A673 (cell line): ENCODE measurements at regions of chr4 and their contacts with region 1.

Region 1: GRCh38 chr4:26583865-26584652 is at the start of gene TBC1D19:
- DNase-seq: peak; percentile 95
- H3K4me3 ChIP-seq: peak within 1 kb of the TSS; percentile 97
- H3K27ac ChIP-seq: peak within 1 kb of the TSS; percentile 49
- H3K4me1 ChIP-seq: peaks cover 4% of the 10 kb centered on the region
- H3K27me3 ChIP-seq: no peaks in the 10 kb centered on the region
- CTCF ChIP-seq: 0 out of 2 replicates have a peak, but pooled peaks have one; percentile 6
- total RNA-seq, gene TBC1D19: 9.9 and 10.9 TPM in 2 replicates

Region 2: DNA sequence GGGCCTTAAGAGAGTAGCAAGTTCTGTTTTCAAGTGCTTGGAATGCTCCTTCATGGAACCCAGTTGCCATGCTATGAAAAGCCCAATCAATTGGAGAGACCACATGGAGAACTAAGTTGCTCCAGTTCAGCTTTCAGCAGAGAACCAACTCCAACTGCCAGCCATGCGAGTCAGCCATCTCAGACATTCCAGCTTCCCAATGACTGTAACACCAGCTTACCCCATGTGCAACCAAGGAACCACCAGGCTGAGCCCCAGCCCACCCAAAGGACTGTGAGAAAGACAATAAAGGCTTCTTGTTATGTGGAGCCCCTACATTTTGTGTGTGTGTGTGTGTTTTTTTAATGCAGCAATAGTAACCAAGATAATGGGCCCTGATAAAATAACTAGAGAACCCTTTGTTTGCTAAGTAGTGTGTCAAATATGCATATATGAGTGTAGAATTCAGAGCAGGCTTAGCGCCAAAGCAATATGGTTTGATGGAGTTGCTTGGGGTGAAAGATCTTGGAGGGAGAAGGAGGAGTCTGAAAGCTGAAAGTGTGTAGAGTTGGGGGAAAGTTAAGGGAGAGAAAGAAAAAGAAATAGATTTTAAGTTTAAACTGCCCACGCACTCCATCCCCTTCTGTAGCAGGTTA is 58.8 kb before region 1 on chr4:
- CTCF ChIA-PET with region 1: no interaction called
- POLR2A ChIA-PET with region 1: no interaction called
- intact Hi-C with region 1: no loop called
- DNase-seq: no peak
- H3K4me3 ChIP-seq: no peak overlapping the region
- H3K27ac ChIP-seq: no peak overlapping the region
- H3K4me1 ChIP-seq: no peaks in the 10 kb centered on the region
- H3K27me3 ChIP-seq: no peaks in the 10 kb centered on the region
- CTCF ChIP-seq: no peak

Region 3: GRCh38 chr4:26568446-26568994 is 15.5 kb before region 1 on chr4:
- CTCF ChIA-PET with region 1: no interaction called
- POLR2A ChIA-PET with region 1: no interaction called
- intact Hi-C with region 1: no loop called
- DNase-seq: peak; percentile 96
- H3K4me3 ChIP-seq: no peak overlapping the region
- H3K27ac ChIP-seq: peak overlapping the region; percentile 44
- H3K4me1 ChIP-seq: peaks cover 40% of the 10 kb centered on the region
- H3K27me3 ChIP-seq: no peaks in the 10 kb centered on the region
- CTCF ChIP-seq: no peak

Region 4: GRCh38 chr4:26887143-26887542 is 303.1 kb after region 1 on chr4:
- CTCF ChIA-PET with region 1: interaction called, 14 read pairs
- POLR2A ChIA-PET with region 1: no interaction called
- intact Hi-C with region 1: no loop called
- DNase-seq: no peak
- H3K4me3 ChIP-seq: no peak overlapping the region
- H3K27ac ChIP-seq: no peak overlapping the region
- H3K4me1 ChIP-seq: no peaks in the 10 kb centered on the region
- H3K27me3 ChIP-seq: no peaks in the 10 kb centered on the region
- CTCF ChIP-seq: no peak

Region 5: DNA sequence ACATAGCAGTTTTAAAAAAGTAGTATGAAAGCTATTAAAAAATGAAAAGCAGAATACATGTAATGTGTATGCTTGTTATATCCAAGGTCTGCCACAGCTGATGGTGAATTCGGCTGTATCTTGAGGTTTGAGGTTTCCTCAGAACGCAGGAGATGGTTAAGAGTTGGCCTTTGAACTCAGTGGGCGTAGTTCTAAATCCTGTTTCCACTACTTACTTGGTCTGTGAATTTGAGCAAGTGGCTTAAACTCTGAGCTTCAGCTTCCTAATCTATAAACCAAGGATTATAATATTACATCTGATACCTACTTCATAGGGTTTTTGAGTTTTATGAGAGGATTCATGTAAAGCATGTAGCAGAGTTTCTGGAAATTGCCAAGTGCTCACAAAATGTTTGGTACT is 401.8 kb after region 1 on chr4:
- CTCF ChIA-PET with region 1: no interaction called
- POLR2A ChIA-PET with region 1: no interaction called
- intact Hi-C with region 1: no loop called
- DNase-seq: no peak
- H3K4me3 ChIP-seq: no peak overlapping the region
- H3K27ac ChIP-seq: no peak overlapping the region
- H3K4me1 ChIP-seq: peaks cover 6% of the 10 kb centered on the region
- H3K27me3 ChIP-seq: no peaks in the 10 kb centered on the region
- CTCF ChIP-seq: no peak